Activated T-helper 1 cell treated with anti-CD3 and anti-CD28 coated beads, Interleukin-12 subunit alpha, Interleukin-12 subunit beta, Interleukin-2, Interleukin-4 antibody, amounts not matched to agents 30 ng/mL and 10 ng/mL and 1 ng/mL, durations not matched to agents 14 hours and 24 hours and 36 hours (primary cell): ENCODE measurements at regions of chr1 and their contacts with region 1.

Region 1: DNA sequence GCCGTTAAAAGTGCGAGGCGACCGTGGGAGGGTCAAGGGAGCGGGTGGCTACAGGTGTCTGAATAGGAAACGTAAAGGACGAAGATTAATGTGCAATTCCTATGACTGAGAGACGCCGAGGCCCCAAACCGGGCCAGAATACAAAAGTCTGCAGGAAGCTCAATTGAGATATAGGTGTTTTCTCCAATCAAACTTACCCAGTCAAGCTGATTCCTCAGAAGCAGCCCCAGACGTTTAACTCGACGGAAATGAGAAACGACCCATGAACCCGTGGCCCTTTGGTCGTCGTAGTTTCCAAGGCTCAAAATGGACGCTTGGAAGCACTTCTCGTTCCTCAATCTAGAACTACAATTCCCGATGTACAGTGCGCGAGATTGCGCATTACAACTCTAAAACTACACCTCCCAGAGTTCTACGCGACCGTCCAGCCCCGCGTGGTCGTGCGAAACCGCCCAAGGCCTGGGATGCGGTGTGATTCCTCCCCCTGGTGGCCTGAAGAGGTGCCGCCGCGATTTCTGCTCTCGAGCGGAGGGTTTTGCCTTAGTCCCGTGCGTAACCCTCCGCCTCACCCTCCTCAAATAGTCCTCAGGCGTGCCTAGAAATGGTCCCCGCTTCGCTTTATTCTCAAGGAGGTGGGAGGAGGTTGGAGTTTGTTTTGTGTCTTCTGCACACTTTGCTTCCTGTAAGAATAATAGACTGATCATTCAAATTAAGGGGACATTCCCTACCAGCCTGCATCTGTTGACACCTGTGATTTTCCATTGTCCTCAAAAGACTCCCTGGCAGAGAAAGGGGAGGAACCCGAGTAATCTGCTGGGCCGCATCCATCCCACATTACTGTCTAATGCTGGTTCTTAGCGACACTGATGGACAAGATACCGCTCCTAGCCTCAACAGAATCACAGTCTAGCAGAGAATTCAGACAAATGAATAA is at the start of gene PAFAH2:
- DNase-seq: peak; percentile 96
- H3K4me3 Mint-ChIP-seq: peak within 1 kb of the TSS; percentile 98
- H3K27ac Mint-ChIP-seq: peak within 1 kb of the TSS; percentile 98
- H3K4me1 Mint-ChIP-seq: peaks cover 18% of the 10 kb centered on the region
- H3K27me3 Mint-ChIP-seq: no peaks in the 10 kb centered on the region
- total RNA-seq, gene PAFAH2: 8.0 and 9.0 TPM in 2 replicates

Region 2: GRCh38 chr1:25247024-25247828 is 750.9 kb before region 1 on chr1 and contains the start of gene RSRP1:
- intact Hi-C with region 1: loop called (anchors 5 kb)
- DNase-seq: peak; percentile 100
- H3K4me3 Mint-ChIP-seq: peak within 1 kb of the TSS; percentile 92
- H3K27ac Mint-ChIP-seq: peak within 1 kb of the TSS; percentile 99
- H3K4me1 Mint-ChIP-seq: peaks cover 50% of the 10 kb centered on the region
- H3K27me3 Mint-ChIP-seq: peaks cover 2% of the 10 kb centered on the region
- total RNA-seq, gene RSRP1: 123 and 129 TPM in 2 replicates

Region 3: DNA sequence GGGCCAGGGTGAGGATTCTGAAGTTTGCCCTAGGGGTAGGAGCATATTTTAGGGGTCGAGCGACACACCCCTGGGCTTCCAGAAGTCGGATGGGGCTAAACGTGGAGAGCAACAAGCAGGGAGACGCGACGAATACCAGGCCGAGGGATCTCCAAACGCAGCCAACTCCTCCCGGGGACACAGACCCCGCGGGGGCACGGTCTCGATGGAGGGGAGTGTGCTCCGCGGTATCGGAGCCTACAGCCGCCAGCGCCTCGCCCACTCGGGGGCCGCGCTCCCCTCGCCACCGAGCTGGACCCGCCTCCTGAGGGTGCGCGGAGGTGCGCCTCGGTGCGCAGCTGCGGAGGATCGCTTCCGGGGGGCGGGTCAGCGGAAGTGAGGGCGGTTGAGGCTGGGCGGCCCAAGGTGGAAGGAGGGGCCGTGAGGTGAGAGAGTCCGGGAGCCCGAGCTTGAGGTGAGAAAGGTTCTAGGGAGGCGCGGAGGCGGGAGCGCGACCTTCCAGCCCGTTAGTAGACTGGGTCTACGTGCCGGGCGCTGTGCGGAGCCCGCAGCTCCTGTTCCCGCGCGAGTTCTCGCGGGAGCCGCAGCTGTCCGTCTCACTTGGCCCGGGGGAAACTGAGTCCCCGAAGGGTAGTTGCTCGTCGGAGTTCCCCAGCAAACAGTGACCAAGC is 178.4 kb before region 1 on chr1 and contains the start of gene MTFR1L:
- intact Hi-C with region 1: loop called (anchors 1 kb)
- DNase-seq: peak; percentile 93
- H3K4me3 Mint-ChIP-seq: peak within 1 kb of the TSS; percentile 97
- H3K27ac Mint-ChIP-seq: peak within 1 kb of the TSS; percentile 93
- H3K4me1 Mint-ChIP-seq: peaks cover 35% of the 10 kb centered on the region
- H3K27me3 Mint-ChIP-seq: no peaks in the 10 kb centered on the region
- total RNA-seq, gene MTFR1L: 29.3 and 30.0 TPM in 2 replicates

Region 4: GRCh38 chr1:25858906-25859789 is 138.9 kb before region 1 on chr1 and contains the start of gene AUNIP:
- intact Hi-C with region 1: loop called (anchors 1 kb)
- DNase-seq: peak; percentile 88
- H3K4me3 Mint-ChIP-seq: peak within 1 kb of the TSS; percentile 89
- H3K27ac Mint-ChIP-seq: peak within 1 kb of the TSS; percentile 89
- H3K4me1 Mint-ChIP-seq: peaks cover 35% of the 10 kb centered on the region
- H3K27me3 Mint-ChIP-seq: no peaks in the 10 kb centered on the region
- total RNA-seq, gene AUNIP: 10.2 and 12.3 TPM in 2 replicates

Region 5: DNA sequence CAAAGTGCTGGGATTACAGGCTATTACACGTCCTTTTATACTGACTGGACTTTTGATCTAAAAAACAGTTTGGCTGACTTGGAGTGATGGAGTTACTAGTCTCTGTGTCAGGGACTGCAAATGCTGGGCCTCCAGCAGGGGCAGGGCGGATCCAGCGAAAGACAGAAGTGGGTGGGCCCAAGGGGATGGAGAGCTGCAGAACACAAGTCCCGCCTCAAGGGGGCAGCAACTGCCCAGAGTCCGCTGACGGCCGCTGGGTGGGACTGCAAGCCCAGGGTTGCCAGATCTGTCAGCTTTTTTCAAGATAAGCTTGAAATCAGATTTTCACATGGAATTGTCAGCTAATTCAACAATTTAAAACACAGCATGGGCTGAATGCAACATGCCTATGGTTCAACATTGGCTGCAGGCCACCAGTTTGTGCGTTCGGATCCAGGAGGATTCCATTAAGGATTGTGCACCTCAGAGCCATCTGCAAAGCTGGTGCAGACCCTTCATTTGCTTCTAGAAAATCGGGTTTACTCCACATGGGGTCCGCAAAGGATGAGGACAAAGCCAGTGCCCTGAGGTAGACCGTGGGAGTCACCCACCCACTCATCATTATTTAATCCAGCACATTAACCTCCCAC is 102.6 kb before region 1 on chr1:
- intact Hi-C with region 1: loop called (anchors 1 kb)
- DNase-seq: peak; percentile 85
- H3K4me3 Mint-ChIP-seq: no peak overlapping the region
- H3K27ac Mint-ChIP-seq: peak overlapping the region; percentile 40
- H3K4me1 Mint-ChIP-seq: peaks cover 34% of the 10 kb centered on the region
- H3K27me3 Mint-ChIP-seq: no peaks in the 10 kb centered on the region

Region 6: GRCh38 chr1:25971066-25971810 is 26.9 kb before region 1 on chr1:
- intact Hi-C with region 1: loop called (anchors 1 kb)
- DNase-seq: peak; percentile 5
- H3K4me3 Mint-ChIP-seq: peak overlapping the region; percentile 31
- H3K27ac Mint-ChIP-seq: peak overlapping the region; percentile 69
- H3K4me1 Mint-ChIP-seq: peaks cover 32% of the 10 kb centered on the region
- H3K27me3 Mint-ChIP-seq: no peaks in the 10 kb centered on the region

Region 7: GRCh38 chr1:26111530-26112406 is 113.7 kb after region 1 on chr1 and contains the start of gene PDIK1L:
- intact Hi-C with region 1: loop called (anchors 1 kb)
- DNase-seq: peak; percentile 91
- H3K4me3 Mint-ChIP-seq: peak within 1 kb of the TSS; percentile 96
- H3K27ac Mint-ChIP-seq: peak within 1 kb of the TSS; percentile 92
- H3K4me1 Mint-ChIP-seq: peaks cover 36% of the 10 kb centered on the region
- H3K27me3 Mint-ChIP-seq: no peaks in the 10 kb centered on the region
- total RNA-seq, gene PDIK1L: 15.5 and 18.9 TPM in 2 replicates

Region 8: GRCh38 chr1:26529655-26530409 is 531.7 kb after region 1 on chr1 and contains the start of gene RPS6KA1:
- intact Hi-C with region 1: no loop called
- DNase-seq: peak; percentile 70
- H3K4me3 Mint-ChIP-seq: peak within 1 kb of the TSS; percentile 94
- H3K27ac Mint-ChIP-seq: peak within 1 kb of the TSS; percentile 93
- H3K4me1 Mint-ChIP-seq: peaks cover 42% of the 10 kb centered on the region
- H3K27me3 Mint-ChIP-seq: peaks cover 2% of the 10 kb centered on the region
- total RNA-seq, gene RPS6KA1: 324 and 331 TPM in 2 replicates